Esophagus squamous epithelium (tissue), 5 donors: ENCODE measurements at regions of chr19 and their contacts with region 1.

Region 1: GRCh38 chr19:28737021-28737895 is 475.7 kb downstream of the UQCRFS1 start:
- DNase-seq: no peak
- H3K4me3 ChIP-seq: peak overlapping the region in 1 of 4 donors; percentile 23
- H3K27ac ChIP-seq: no peak overlapping the region
- H3K4me1 ChIP-seq: peaks cover 0 to 17% (median 0%) of the 10 kb centered on the region in 3 donors
- H3K27me3 ChIP-seq: no peaks in the 10 kb centered on the region
- CTCF ChIP-seq: peak in 5 of 6 experiments; percentile 41 to 54 (median 45)
- POLR2A ChIP-seq: no peak

Region 2: GRCh38 chr19:29263305-29264135 is 526.3 kb after region 1 on chr19:
- intact Hi-C with region 1: loop called (anchors 5 kb)
- DNase-seq: no peak
- H3K4me3 ChIP-seq: no peak overlapping the region
- H3K27ac ChIP-seq: no peak overlapping the region
- H3K4me1 ChIP-seq: no peaks in the 10 kb centered on the region
- H3K27me3 ChIP-seq: peaks cover 0 to 42% (median 0%) of the 10 kb centered on the region in 4 donors
- CTCF ChIP-seq: peak; percentile 35 to 81 (median 56)
- POLR2A ChIP-seq: no peak